Uterus (tissue), 4 donors: ENCODE measurements at regions of chr16 and their contacts with region 1.

Region 1: DNA sequence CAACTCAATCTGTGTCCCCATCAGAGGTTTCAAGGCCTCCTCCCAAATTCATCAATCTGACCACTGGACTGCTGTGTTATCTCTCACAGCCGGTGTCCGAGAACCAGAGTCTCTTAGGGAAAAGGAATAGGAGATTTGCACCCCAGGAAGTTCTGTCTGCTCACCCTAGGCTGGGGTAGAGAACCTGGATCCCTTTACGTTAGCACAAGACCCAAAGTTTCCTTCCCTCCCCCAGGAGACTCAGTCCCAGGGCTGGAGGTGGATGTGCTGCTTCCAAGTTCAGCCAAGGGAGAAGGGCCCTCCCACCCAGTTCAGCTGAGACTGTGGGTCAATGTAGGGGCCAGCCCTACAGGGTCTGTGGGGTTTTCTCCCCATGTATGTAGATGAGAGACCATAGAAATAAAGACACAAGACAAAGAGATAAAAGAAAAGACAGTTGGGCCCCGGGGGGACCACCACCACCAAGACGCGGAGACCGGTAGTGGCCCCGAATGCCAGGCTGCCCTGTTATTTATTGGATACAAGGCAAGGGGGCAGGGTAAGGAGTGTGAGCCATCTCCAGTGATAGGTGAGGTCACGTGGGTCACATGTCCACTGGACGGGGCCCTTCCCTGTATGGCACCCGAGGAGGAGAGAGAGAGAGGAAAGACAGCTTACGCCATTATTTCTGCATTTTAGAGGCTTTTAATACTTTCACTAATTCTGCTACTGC is 22.7 kb upstream of the OR1F1 start:
- DNase-seq: no peak
- H3K4me3 ChIP-seq: peak overlapping the region in 1 of 2 donors; percentile 21
- H3K27ac ChIP-seq: peak overlapping the region in 1 of 2 donors; percentile 41
- H3K4me1 ChIP-seq: peaks cover 0 to 1% of the 10 kb centered on the region in 2 donors
- H3K27me3 ChIP-seq: peaks cover 0 to 14% of the 10 kb centered on the region in 2 donors
- CTCF ChIP-seq: no peak
- POLR2A ChIP-seq: no peak

Region 2: GRCh38 chr16:3059000-3059722 is 106.1 kb before region 1 on chr16:
- intact Hi-C with region 1: loop called (anchors 5 kb)
- DNase-seq: peak; percentile 72 to 86
- H3K4me3 ChIP-seq: peak overlapping the region; percentile 65 to 91
- H3K27ac ChIP-seq: peak overlapping the region; percentile 58 to 85
- H3K4me1 ChIP-seq: peaks cover 0 to 10% of the 10 kb centered on the region in 2 donors
- H3K27me3 ChIP-seq: no peaks in the 10 kb centered on the region
- CTCF ChIP-seq: peak; percentile 78 to 98 (median 98)
- POLR2A ChIP-seq: peak in 1 of 2 donors; percentile 51

Region 3: GRCh38 chr16:3431779-3432219 is 266.5 kb after region 1 on chr16:
- intact Hi-C with region 1: no loop called
- DNase-seq: peak; percentile 21 to 37
- H3K4me3 ChIP-seq: no peak overlapping the region
- H3K27ac ChIP-seq: no peak overlapping the region
- H3K4me1 ChIP-seq: no peaks in the 10 kb centered on the region
- H3K27me3 ChIP-seq: no peaks in the 10 kb centered on the region
- CTCF ChIP-seq: no peak
- POLR2A ChIP-seq: no peak